Right ventricle myocardium inferior (tissue), 1 donor: ENCODE measurements at regions of chr16 and their contacts with region 1.

Region 1: GRCh38 chr16:86181526-86181925 is 282.6 kb downstream of the IRF8 start:
- DNase-seq: no peak
- ATAC-seq: no peak

Region 2: GRCh38 chr16:86118467-86119307 is 62.8 kb before region 1 on chr16:
- intact Hi-C with region 1: no loop called
- DNase-seq: no peak
- ATAC-seq: no peak

Region 3: GRCh38 chr16:86158688-86159360 is 22.7 kb before region 1 on chr16:
- intact Hi-C with region 1: no loop called
- DNase-seq: no peak
- ATAC-seq: no peak

Region 4: DNA sequence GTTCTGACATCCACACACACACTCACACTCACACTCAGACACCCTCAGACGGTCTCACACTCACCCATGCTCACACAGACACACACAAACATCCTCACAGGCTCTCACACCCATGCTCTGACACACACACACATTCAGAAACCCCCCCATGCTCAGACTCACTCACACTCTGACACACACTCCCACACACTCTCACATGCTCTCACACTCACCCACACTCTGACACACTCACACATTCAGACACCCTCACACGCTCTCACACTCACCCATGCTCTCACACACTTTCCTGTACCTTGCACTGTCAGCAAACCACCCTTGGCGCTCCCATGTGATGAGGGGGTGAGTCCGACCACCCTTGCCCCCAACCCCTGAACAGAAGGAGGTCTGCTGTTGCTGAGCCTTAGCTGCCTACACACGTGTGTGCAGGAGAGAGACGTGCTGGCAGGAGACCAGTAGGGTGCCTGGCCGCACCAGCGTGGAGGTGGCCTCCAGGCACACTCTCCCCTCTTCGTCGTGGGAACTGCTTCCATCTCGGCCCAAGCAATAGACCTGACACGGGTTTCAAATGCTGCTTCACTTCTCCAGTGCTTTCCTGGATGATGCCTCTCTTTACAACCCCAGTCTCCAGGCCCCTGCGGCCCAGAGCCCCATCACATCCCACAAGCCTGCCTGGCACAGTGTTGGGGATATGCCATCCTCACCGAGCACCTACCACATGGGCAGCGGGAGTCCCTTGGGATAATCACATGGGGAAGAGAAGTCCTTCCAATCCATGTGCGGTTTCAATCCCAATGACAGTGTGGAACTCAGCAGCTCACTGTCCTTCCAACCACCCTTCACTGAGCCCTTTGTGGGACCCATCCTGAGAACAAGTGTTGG is 61.0 kb after region 1 on chr16:
- intact Hi-C with region 1: loop called (anchors 10 kb)
- DNase-seq: no peak
- ATAC-seq: no peak

Region 5: GRCh38 chr16:86306811-86307516 is 125.4 kb after region 1 on chr16:
- intact Hi-C with region 1: no loop called
- DNase-seq: no peak
- ATAC-seq: no peak

Region 6: DNA sequence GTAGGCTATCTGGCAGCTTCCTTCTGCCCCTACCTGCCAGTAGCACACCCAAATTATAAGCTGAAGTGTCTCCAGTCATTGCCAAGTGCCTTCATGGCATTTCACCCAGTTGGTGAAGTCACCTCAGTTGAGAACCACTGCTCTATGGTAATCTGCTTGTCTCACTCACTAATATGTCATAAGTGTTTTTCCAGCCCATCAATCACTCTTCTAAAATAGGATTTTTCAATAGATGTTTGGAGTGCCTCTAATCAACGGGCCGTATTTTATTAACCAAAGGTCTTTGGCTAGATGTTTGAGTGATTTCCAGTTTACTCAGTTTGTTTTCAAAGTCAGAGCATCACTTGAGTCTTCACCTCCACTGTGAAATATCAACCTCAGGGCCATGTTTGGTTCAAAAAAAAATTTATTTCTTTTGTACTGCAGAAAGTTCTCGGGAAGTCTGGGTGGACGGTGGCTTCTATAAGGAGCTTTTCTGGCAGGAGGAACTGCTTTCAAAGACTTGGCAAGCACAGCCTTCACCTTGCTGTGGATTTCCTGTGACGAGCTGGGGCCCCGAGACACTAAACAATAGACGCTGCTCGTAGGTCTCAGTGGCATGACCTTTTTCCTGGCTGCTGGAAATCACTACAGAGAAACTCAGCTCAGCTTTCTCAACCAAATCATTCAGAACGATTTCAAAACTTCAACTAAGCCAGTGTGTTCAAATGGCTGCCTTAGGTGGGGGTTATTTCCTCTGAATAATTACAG is 233.6 kb after region 1 on chr16:
- intact Hi-C with region 1: no loop called
- DNase-seq: no peak
- ATAC-seq: no peak